AG04450 (cell line): ENCODE measurements at regions of chr12 and their contacts with region 1.

Region 1: DNA sequence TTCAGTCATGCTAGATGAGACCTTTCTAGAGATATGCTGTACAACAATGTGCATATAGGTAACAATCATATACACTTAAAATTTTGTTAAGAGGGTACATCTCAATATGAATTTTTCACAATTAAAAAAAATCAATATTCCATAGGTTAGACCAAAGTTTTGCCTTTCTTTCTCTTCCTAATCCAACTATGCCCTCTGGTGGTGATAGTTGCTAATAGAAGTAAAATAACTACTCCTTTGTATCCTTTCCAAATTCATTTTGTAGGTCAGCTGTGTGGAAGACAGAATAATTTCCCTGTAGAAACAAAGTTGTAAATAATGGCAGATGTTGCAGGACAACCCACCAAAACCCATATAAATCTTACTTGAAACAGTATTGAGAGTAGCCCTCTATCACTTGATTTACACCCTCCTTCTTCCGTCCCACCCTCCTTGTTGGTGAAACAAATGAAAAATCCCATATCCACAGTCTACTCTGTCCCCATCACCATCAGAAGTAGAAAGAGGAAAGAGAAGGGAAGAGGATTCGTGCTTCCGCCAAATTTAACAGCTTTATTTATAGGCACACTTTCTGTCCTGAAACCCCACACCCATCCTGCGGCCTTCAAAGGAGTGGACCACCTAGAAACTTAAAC is 34.2 kb upstream of the KICS2 start:
- DNase-seq: peak; percentile 27
- H3K4me3 ChIP-seq: no peak overlapping the region
- H3K27ac ChIP-seq: no peak overlapping the region
- H3K27me3 ChIP-seq: no peaks in the 10 kb centered on the region
- CTCF ChIP-seq: peak; percentile 67

Region 2: GRCh38 chr12:63826006-63826585 is 430.2 kb before region 1 on chr12:
- CTCF ChIA-PET with region 1: interaction called, 47 read pairs
- POLR2A ChIA-PET with region 1: no interaction called
- DNase-seq: peak; percentile 59
- H3K4me3 ChIP-seq: no peak overlapping the region
- H3K27ac ChIP-seq: no peak overlapping the region
- H3K27me3 ChIP-seq: no peaks in the 10 kb centered on the region
- CTCF ChIP-seq: peak; percentile 92

Region 3: DNA sequence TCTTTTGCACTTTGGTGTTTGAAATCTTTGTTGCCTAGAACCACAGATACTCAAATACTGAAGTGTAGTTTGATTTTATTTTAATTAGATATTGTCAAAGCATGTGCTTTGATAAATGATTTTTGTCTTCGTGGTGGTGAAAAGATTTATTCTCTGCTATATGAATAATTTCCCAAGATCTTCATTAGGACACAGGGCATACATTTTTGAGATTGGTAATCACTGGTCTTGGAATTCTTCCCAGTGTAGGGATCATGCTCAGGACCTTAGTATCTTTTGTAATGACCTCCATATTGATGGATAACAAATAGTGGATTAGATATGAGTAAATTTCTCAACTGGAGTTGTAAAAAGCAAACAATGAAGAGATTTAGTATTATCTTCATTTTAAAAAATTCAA is 223.9 kb after region 1 on chr12:
- CTCF ChIA-PET with region 1: no interaction called
- POLR2A ChIA-PET with region 1: no interaction called
- DNase-seq: no peak
- H3K4me3 ChIP-seq: no peak overlapping the region
- H3K27ac ChIP-seq: no peak overlapping the region
- H3K27me3 ChIP-seq: no peaks in the 10 kb centered on the region
- CTCF ChIP-seq: no peak